CD14-positive monocyte (primary cell): ENCODE measurements at regions of chr9 and their contacts with region 1.

Region 1: GRCh38 chr9:79215821-79216220 is 355.9 kb upstream of the TLE4 start:
- DNase-seq: peak in 1 of 3 donors; percentile 4
- H3K4me3 ChIP-seq: no peak overlapping the region
- H3K4me3 Mint-ChIP-seq: no peak overlapping the region
- H3K27ac ChIP-seq: no peak overlapping the region
- H3K27ac Mint-ChIP-seq: peak overlapping the region in 2 of 7 donors; percentile 30 to 53
- H3K4me1 ChIP-seq: peaks cover 0 to 4% of the 10 kb centered on the region in 2 donors
- H3K4me1 Mint-ChIP-seq: peaks cover 3% of the 10 kb centered on the region
- H3K27me3 ChIP-seq: no peaks in the 10 kb centered on the region
- H3K27me3 Mint-ChIP-seq: peaks cover 0 to 1% (median 0%) of the 10 kb centered on the region in 3 donors
- CTCF ChIP-seq: no peak

Region 2: GRCh38 chr9:79237861-79238260 is 22.0 kb after region 1 on chr9:
- intact Hi-C with region 1: loop called in 1 of 2 experiments (anchors 1 kb)
- DNase-seq: peak in 2 of 3 donors; percentile 16 to 23
- H3K4me3 ChIP-seq: no peak overlapping the region
- H3K4me3 Mint-ChIP-seq: peak overlapping the region in 1 of 2 donors; percentile 12
- H3K27ac ChIP-seq: peak overlapping the region in 1 of 2 donors; percentile 42
- H3K27ac Mint-ChIP-seq: peak overlapping the region in 1 of 7 donors; percentile 43
- H3K4me1 ChIP-seq: peaks cover 32 to 34% of the 10 kb centered on the region in 2 donors
- H3K4me1 Mint-ChIP-seq: peaks cover 49% of the 10 kb centered on the region
- H3K27me3 ChIP-seq: no peaks in the 10 kb centered on the region
- H3K27me3 Mint-ChIP-seq: peaks cover 0 to 1% (median 1%) of the 10 kb centered on the region in 3 donors
- CTCF ChIP-seq: no peak